ENCODE measurements at regions of chr19 and their contacts with region 1.

Region 1: DNA sequence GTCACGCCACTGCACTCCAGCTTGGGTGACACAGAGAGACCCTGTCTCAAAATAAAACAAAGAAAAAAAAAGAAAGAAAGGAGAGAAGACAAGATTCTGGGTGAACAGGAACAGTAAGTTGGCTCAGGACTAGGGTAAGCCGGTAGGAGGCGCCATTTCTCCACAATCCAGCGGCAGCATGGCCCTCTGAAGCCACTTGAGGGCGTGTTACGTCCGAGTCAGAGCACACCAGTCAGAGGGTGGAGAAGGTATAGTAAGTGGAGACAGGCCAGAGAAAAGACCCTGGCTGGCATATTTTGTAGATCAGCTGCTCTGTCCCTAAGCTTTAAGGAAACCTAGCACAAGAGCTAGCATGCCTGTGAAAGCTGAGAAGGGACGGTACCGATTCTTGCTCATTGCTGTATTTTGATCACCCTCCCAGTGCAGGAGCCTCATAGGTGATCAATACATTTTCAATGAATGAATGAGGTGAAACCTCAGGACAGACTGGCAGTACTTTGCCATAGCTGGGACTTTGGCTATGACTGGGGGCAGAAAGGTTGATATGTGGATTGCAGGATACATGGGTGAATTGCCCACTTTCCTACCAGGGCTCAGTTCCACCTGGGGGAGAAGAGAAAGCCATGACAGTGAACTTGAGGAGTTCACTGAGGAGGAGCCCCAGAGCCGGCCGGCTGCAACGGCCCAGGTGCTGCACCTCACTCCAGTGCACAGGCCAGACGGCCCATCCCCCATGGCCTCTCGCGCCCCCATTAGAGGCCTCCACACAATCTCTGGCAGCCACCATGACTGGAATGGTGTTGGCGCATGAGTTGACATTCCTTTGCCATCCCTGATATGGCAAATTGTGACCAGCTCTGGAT is 23.5 kb downstream of the POU2F2 start:
- DNase-seq: peak; percentile 93
- H3K4me3 Mint-ChIP-seq: no peak overlapping the region
- H3K27ac Mint-ChIP-seq: no peak overlapping the region
- H3K4me1 Mint-ChIP-seq: peaks cover 35% of the 10 kb centered on the region
- H3K27me3 Mint-ChIP-seq: peaks cover 39% of the 10 kb centered on the region
- CTCF ChIP-seq: peak; percentile 100

Region 2: GRCh38 chr19:42132851-42133528 is 24.2 kb after region 1 on chr19:
- CTCF ChIA-PET with region 1: interaction called, 8 read pairs
- intact Hi-C with region 1: loop called (anchors 1 kb)
- DNase-seq: peak; percentile 92
- H3K4me3 Mint-ChIP-seq: peak overlapping the region; percentile 60
- H3K27ac Mint-ChIP-seq: no peak overlapping the region
- H3K4me1 Mint-ChIP-seq: peaks cover 30% of the 10 kb centered on the region
- H3K27me3 Mint-ChIP-seq: peaks cover 33% of the 10 kb centered on the region
- CTCF ChIP-seq: peak; percentile 100

Region 3: DNA sequence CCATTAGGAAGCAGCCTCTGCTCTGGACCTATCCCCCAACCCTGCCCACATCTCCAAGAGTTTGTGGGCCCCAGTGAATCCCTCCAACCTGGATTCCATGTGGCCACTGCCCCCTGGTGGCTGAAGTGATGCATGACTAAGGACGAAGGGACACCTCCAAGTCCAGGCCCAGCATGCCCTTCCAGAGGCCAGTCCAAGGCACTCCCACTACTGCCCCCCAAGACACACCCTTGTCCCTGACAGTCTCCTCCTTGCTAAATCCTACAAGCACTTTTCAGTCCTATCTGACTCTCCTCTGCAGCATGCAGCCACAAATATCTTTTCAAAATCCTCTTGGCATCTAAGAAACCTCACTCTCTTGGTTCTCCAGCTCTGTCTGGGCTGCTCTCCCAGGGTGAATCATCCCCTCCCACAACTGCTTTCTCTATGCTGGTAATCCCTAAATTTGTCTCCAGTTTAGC is 75.7 kb after region 1 on chr19:
- CTCF ChIA-PET with region 1: interaction called, 5 read pairs
- intact Hi-C with region 1: loop called (anchors 2 kb)
- DNase-seq: peak; percentile 91
- H3K4me3 Mint-ChIP-seq: no peak overlapping the region
- H3K27ac Mint-ChIP-seq: peak overlapping the region; percentile 6
- H3K4me1 Mint-ChIP-seq: peaks cover 18% of the 10 kb centered on the region
- H3K27me3 Mint-ChIP-seq: peaks cover 19% of the 10 kb centered on the region
- CTCF ChIP-seq: peak; percentile 94

Region 4: GRCh38 chr19:42244347-42245220 is 135.8 kb after region 1 on chr19:
- CTCF ChIA-PET with region 1: interaction called, 8 read pairs
- intact Hi-C with region 1: loop called (anchors 1 kb)
- DNase-seq: peak; percentile 95
- H3K4me3 Mint-ChIP-seq: peak overlapping the region; percentile 75
- H3K27ac Mint-ChIP-seq: peak overlapping the region; percentile 51
- H3K4me1 Mint-ChIP-seq: peaks cover 40% of the 10 kb centered on the region
- H3K27me3 Mint-ChIP-seq: no peaks in the 10 kb centered on the region
- CTCF ChIP-seq: peak; percentile 75

Region 5: GRCh38 chr19:42325273-42325895 is 216.6 kb after region 1 on chr19 and contains the start of gene MEGF8:
- CTCF ChIA-PET with region 1: no interaction called
- intact Hi-C with region 1: loop called (anchors 10 kb)
- DNase-seq: peak; percentile 99
- H3K4me3 Mint-ChIP-seq: peak within 1 kb of the TSS; percentile 84
- H3K27ac Mint-ChIP-seq: peak within 1 kb of the TSS; percentile 69
- H3K4me1 Mint-ChIP-seq: peaks cover 29% of the 10 kb centered on the region
- H3K27me3 Mint-ChIP-seq: peaks cover 38% of the 10 kb centered on the region
- CTCF ChIP-seq: peak; percentile 88
- total RNA-seq, gene MEGF8: 32.0 and 35.0 TPM in 2 replicates

Region 6: GRCh38 chr19:42433503-42434260 is 324.9 kb after region 1 on chr19:
- CTCF ChIA-PET with region 1: no interaction called
- intact Hi-C with region 1: loop called (anchors 2 kb)
- DNase-seq: peak; percentile 88
- H3K4me3 Mint-ChIP-seq: no peak overlapping the region
- H3K27ac Mint-ChIP-seq: no peak overlapping the region
- H3K4me1 Mint-ChIP-seq: peaks cover 19% of the 10 kb centered on the region
- H3K27me3 Mint-ChIP-seq: no peaks in the 10 kb centered on the region
- CTCF ChIP-seq: peak; percentile 84

Measured in Calu3 (cell line).